Activated T-helper 2 cell treated with anti-CD3 and anti-CD28 coated beads, Interferon-gamma antibody, Interleukin-2, Interleukin-4, amounts not matched to agents 10 μg/mL and 5 μg/mL and 100 μg/mL, durations not matched to agents 14 hours and 24 hours and 36 hours (primary cell): ENCODE measurements at regions of chr13 and their contacts with region 1.

Region 1: DNA sequence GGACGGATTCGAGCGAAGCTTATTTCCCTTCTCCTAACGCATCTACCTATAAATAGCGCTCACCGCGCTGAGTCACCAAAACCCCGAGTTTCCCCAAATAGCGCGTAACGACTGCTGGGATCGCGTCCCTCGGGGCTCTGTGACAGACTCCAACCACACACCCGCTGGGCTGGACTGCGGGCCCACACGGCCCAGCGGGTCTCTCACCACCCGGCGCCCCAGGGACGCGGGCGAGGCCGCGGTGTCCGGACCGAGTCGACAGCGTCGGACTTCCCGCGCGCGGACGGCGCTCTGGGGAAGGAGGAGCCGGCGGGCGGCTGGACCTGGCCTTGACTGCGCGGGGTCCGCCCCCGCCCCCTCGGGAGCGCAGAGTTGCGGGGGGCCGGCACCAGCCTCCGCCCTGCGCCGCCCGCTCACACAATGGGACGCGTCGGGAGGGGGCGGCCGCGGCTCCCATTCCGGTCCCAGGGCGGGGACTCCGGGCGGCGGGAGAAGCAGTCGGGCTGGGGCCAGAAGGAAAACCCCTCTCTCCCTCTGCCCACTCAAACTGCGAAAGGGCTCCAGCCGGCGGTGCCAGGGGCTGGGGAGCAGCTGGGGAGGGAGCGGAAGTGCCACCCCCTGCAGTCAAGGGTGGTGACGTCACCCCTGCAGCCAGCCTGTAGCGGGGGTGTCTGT is 108.8 kb downstream of the KCNRG start:
- DNase-seq: peak; percentile 58
- H3K4me3 Mint-ChIP-seq: peak overlapping the region; percentile 78
- H3K27ac Mint-ChIP-seq: peak overlapping the region; percentile 80
- H3K4me1 Mint-ChIP-seq: peaks cover 32% of the 10 kb centered on the region
- H3K27me3 Mint-ChIP-seq: peaks cover 29% of the 10 kb centered on the region

Region 2: GRCh38 chr13:49481788-49482187 is 642.2 kb before region 1 on chr13:
- intact Hi-C with region 1: no loop called
- DNase-seq: no peak
- H3K4me3 Mint-ChIP-seq: no peak overlapping the region
- H3K27ac Mint-ChIP-seq: no peak overlapping the region
- H3K4me1 Mint-ChIP-seq: no peaks in the 10 kb centered on the region
- H3K27me3 Mint-ChIP-seq: no peaks in the 10 kb centered on the region

Region 3: DNA sequence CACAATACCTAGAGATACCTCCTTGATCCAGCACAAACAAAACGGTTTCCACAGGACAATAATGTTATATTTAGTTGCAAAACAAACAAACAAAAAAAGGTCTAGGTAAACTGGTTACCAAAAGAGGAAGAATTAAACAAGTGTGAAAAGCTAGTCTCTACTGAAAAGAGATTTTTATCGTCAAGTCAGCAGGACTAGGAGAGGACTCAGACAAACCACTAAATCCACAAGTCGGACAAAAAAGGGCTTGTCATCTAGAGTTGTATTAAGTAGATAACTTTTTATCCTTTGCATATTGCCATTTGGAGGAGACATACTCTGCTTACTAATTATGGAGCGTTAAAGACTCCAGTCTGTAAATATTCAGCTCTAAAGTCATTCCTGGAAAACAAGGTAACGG is 321.6 kb before region 1 on chr13:
- intact Hi-C with region 1: no loop called
- DNase-seq: no peak
- H3K4me3 Mint-ChIP-seq: no peak overlapping the region
- H3K27ac Mint-ChIP-seq: no peak overlapping the region
- H3K4me1 Mint-ChIP-seq: no peaks in the 10 kb centered on the region
- H3K27me3 Mint-ChIP-seq: peaks cover 9% of the 10 kb centered on the region

Region 4: DNA sequence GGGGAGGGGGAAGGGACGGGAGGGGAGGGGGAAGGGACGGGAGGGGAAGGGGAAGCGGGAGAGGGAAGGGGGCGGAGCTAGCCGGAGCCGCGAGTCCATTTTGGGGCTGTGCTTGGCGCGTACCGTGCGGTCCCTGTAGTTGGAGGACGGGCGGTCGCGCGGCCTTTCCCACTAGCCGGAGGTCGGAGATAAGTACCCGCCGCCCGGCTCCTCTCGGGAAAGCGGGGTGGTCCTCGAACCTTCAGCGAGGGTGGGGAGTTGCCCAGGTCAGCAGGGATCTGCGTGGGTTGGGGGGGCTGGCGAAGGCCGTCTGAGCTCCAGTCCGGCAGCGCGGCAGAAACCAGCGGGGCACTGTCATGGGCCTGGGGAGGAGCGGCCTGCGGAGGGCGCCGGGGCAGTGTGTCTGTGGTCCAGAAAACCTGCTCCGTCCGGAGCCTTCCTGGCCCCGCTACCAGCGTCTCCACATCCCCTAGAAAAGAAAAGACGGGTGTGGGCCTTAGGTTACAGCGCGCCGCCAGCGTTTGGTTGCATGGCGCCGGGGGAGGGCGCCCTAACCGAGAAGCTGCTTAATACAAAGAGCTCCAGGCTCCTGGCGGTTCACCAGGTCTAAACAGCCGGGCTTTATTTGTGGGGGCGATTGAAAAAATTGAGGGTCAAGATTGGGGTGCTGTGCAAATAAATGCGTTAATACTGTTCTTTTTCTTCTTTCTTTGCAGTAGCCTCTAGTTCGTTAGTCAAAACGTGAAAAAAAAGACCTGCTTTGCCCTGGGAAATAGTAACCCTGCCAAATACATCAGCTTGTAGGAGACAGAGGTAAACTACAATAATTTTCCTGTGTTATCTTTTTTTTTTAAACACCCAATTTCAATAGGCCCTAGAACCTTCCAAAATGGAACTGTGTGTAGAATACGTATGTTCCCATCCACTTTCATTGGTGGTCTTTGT is 126.8 kb before region 1 on chr13 and contains the start of gene TRIM13:
- intact Hi-C with region 1: loop called (anchors 1 kb)
- DNase-seq: peak; percentile 79
- H3K4me3 Mint-ChIP-seq: peak within 1 kb of the TSS; percentile 85
- H3K27ac Mint-ChIP-seq: peak within 1 kb of the TSS; percentile 89
- H3K4me1 Mint-ChIP-seq: peaks cover 31% of the 10 kb centered on the region
- H3K27me3 Mint-ChIP-seq: no peaks in the 10 kb centered on the region
- total RNA-seq, gene TRIM13: 17.2 and 17.9 TPM in 2 replicates

Region 5: GRCh38 chr13:50106559-50106958 is 17.4 kb before region 1 on chr13:
- intact Hi-C with region 1: loop called (anchors 2 kb)
- DNase-seq: no peak
- H3K4me3 Mint-ChIP-seq: peak overlapping the region; percentile 28
- H3K27ac Mint-ChIP-seq: peak overlapping the region; percentile 48
- H3K4me1 Mint-ChIP-seq: peaks cover 27% of the 10 kb centered on the region
- H3K27me3 Mint-ChIP-seq: no peaks in the 10 kb centered on the region

Region 6: DNA sequence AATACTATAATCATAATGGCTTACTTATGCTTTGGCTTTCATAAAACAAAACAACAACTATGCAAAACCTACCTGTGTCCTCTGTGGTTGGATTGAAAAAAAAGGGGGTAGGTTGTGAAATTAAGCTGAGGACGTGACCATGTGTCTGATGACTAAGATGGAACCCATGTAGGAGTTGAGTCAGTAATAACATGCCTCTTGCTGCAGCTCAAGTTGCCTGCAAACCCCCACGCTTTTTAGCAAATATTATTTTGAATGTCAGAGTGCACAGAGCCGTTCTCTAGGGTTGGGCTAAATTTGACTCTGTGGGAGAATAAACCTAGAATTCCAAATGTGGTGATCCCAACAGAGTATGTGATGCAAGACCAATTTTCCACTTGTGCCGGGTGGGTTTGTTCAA is 100.5 kb after region 1 on chr13:
- intact Hi-C with region 1: loop called (anchors 2 kb)
- DNase-seq: no peak
- H3K4me3 Mint-ChIP-seq: no peak overlapping the region
- H3K27ac Mint-ChIP-seq: no peak overlapping the region
- H3K4me1 Mint-ChIP-seq: peaks cover 49% of the 10 kb centered on the region
- H3K27me3 Mint-ChIP-seq: peaks cover 56% of the 10 kb centered on the region

Region 7: DNA sequence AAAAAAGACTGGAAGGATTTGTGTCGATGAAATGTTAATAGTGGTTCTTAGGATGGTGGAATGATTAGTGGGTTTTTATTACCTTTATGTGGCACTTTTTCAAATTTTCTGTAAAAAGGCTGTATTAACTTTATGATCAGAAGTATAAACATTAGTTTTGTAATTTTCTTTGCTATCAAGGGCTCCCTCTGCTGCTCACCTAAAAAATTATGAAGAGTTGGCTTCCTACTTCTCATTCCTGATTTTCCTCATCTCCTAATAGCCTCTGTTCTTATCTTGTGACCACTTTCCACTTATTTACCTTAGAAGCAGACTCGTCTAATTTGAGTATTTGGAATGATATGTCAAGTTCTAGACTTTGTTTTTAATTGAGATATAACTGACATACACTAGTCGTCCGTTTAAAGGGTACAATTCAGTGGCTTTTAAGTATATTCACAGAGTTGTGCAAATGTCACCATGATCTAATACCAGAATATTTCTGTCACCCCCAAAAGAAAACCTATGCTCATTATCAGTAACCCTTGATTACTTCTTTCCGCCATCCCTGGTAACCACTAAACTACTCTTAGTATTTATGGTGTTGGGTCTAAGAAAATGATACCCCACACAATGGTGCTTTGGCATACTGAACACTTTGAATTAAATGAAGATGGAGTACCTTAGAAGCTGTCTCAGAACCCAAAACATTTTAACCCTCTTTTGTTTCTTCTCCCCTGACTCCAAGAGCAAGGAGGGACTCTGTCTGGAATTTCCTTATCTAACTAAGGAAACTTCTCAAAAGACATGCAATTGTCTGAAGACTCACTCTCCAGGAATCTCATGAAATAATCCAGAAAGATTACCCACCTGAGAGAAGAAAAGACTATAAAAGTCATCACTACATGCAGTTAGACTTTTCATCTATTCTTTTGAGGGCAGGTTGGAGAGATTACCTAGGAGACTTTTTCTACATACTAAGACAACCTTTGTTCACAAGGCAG is 408.2 kb after region 1 on chr13:
- intact Hi-C with region 1: loop called (anchors 5 kb)
- DNase-seq: no peak
- H3K4me3 Mint-ChIP-seq: no peak overlapping the region
- H3K27ac Mint-ChIP-seq: no peak overlapping the region
- H3K4me1 Mint-ChIP-seq: peaks cover 20% of the 10 kb centered on the region
- H3K27me3 Mint-ChIP-seq: peaks cover 43% of the 10 kb centered on the region

Region 8: DNA sequence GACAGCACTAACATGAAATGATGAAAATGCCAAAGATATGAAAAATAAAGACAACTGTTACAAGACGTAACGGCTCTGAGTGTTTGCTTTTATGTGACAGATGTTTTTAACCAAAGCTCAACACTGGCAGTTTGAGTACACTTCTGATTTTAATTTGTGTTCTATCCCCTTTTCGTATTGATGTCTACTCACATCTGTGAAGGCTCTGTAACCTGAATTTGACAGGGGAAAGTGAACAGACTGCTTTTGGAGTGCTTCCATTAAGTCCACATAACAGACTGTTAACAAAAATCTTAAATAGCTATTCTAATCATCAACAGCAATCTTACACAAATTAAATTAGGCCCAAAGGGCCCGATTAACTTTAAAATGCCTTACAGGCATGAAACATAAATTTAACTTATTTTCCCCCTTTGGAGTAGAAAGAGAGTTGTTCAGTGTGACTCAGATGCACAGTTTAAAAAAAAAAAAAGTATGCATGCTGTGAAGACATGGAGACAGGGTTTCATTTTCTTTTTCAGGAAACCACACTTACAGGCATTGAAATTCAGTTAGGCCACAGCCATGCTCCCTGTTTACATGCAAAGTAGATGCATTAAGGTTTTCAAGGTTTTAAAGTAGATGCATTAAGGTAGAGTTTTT is 769.3 kb after region 1 on chr13:
- intact Hi-C with region 1: loop called (anchors 5 kb)
- DNase-seq: no peak
- H3K4me3 Mint-ChIP-seq: peak overlapping the region; percentile 51
- H3K27ac Mint-ChIP-seq: peak overlapping the region; percentile 88
- H3K4me1 Mint-ChIP-seq: peaks cover 48% of the 10 kb centered on the region
- H3K27me3 Mint-ChIP-seq: no peaks in the 10 kb centered on the region